Activated CD8-positive, alpha-beta T cell treated with anti-CD3 and anti-CD28 coated beads for 36 hours (primary cell): ENCODE measurements at regions of chr7 and their contacts with region 1.

Region 1: GRCh38 chr7:137656227-137656849 is 190.4 kb downstream of the DGKI start:
- DNase-seq: peak; percentile 87
- ATAC-seq: peak; percentile 80
- H3K4me3 Mint-ChIP-seq: no peak overlapping the region
- H3K27ac Mint-ChIP-seq: no peak overlapping the region
- H3K4me1 Mint-ChIP-seq: no peaks in the 10 kb centered on the region
- H3K27me3 Mint-ChIP-seq: peaks cover 8% of the 10 kb centered on the region
- CTCF ChIP-seq: peak; percentile 88

Region 2: GRCh38 chr7:137642472-137642871 is 13.9 kb before region 1 on chr7:
- CTCF ChIA-PET with region 1: interaction called, 12 read pairs
- POLR2A ChIA-PET with region 1: no interaction called
- intact Hi-C with region 1: no loop called
- DNase-seq: no peak
- ATAC-seq: no peak
- H3K4me3 Mint-ChIP-seq: no peak overlapping the region
- H3K27ac Mint-ChIP-seq: no peak overlapping the region
- H3K4me1 Mint-ChIP-seq: no peaks in the 10 kb centered on the region
- H3K27me3 Mint-ChIP-seq: peaks cover 3% of the 10 kb centered on the region
- CTCF ChIP-seq: no peak

Region 3: GRCh38 chr7:137670199-137671071 is 14.1 kb after region 1 on chr7:
- CTCF ChIA-PET with region 1: interaction called, 21 read pairs
- POLR2A ChIA-PET with region 1: no interaction called
- intact Hi-C with region 1: no loop called
- DNase-seq: no peak
- ATAC-seq: no peak
- H3K4me3 Mint-ChIP-seq: no peak overlapping the region
- H3K27ac Mint-ChIP-seq: no peak overlapping the region
- H3K4me1 Mint-ChIP-seq: no peaks in the 10 kb centered on the region
- H3K27me3 Mint-ChIP-seq: peaks cover 16% of the 10 kb centered on the region
- CTCF ChIP-seq: no peak

Region 4: DNA sequence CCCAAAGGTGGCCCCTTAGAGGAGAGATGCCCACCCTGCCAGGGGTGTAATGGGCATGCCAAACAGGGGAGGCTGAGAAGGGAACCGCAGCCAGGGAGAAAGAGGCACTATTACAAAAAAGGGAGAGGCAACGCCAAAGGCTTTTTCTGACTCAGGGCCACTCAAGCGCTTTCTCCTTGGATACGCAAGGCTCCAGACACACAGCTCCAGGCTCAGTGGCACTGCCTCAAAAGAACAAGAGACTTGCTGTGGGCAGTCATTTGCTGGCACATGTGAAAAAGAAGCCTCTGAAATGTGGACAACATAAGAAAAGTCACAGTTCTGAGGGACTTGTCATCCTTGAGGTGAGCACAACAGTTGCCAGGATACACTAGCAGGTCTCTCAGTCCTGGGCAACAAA is 62.0 kb after region 1 on chr7:
- CTCF ChIA-PET with region 1: no interaction called
- POLR2A ChIA-PET with region 1: no interaction called
- intact Hi-C with region 1: no loop called
- DNase-seq: no peak
- ATAC-seq: no peak
- H3K4me3 Mint-ChIP-seq: no peak overlapping the region
- H3K27ac Mint-ChIP-seq: no peak overlapping the region
- H3K4me1 Mint-ChIP-seq: no peaks in the 10 kb centered on the region
- H3K27me3 Mint-ChIP-seq: peaks cover 11% of the 10 kb centered on the region
- CTCF ChIP-seq: no peak

Region 5: DNA sequence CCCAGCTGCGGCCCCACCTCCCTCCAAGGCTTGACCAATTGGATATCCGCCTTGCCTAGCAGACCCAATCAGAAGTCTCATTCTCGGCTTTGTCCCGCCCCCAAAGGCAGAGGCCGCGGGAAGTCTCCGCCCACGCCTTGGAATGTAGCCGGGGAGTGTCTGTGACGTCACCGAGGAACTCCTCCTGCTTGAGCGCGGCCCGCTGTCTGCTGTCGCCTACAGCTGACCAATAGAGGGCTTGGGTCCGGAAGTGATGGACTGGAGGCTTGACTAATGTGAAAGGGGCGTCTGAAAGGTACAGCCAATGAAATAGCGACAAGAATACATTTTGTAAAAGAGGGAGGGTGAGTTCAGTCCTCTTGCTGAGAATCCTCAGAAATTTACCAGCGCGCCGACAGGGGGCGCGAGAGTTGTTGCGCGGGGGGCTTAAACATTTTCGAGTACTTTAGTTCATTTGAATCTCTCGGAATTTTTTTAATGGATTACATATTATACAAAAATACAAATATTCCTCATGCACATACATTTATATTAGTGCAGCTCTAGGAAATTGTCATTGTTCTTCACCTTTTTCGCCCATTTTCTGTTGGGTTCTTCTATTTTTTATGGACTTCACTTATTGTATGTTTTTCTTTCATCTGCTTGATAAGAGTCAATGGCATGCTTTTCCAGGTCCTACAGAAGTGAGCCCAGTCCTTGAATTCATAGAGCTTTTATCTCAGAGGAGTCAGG is 345.9 kb after region 1 on chr7:
- CTCF ChIA-PET with region 1: interaction called, 17 read pairs
- POLR2A ChIA-PET with region 1: no interaction called
- intact Hi-C with region 1: no loop called
- DNase-seq: peak; percentile 98
- ATAC-seq: peak; percentile 96
- H3K4me3 Mint-ChIP-seq: peak overlapping the region; percentile 94
- H3K27ac Mint-ChIP-seq: peak overlapping the region; percentile 93
- H3K4me1 Mint-ChIP-seq: peaks cover 25% of the 10 kb centered on the region
- H3K27me3 Mint-ChIP-seq: no peaks in the 10 kb centered on the region
- CTCF ChIP-seq: peak; percentile 89

Region 6: GRCh38 chr7:138008547-138009349 is 352.4 kb after region 1 on chr7:
- CTCF ChIA-PET with region 1: interaction called, 17 read pairs
- POLR2A ChIA-PET with region 1: no interaction called
- intact Hi-C with region 1: loop called (anchors 2 kb)
- DNase-seq: peak; percentile 29
- ATAC-seq: peak; percentile 68
- H3K4me3 Mint-ChIP-seq: no peak overlapping the region
- H3K27ac Mint-ChIP-seq: no peak overlapping the region
- H3K4me1 Mint-ChIP-seq: no peaks in the 10 kb centered on the region
- H3K27me3 Mint-ChIP-seq: peaks cover 2% of the 10 kb centered on the region
- CTCF ChIP-seq: peak; percentile 86